ENCODE measurements at regions of chr2 and their contacts with region 1.

Region 1: DNA sequence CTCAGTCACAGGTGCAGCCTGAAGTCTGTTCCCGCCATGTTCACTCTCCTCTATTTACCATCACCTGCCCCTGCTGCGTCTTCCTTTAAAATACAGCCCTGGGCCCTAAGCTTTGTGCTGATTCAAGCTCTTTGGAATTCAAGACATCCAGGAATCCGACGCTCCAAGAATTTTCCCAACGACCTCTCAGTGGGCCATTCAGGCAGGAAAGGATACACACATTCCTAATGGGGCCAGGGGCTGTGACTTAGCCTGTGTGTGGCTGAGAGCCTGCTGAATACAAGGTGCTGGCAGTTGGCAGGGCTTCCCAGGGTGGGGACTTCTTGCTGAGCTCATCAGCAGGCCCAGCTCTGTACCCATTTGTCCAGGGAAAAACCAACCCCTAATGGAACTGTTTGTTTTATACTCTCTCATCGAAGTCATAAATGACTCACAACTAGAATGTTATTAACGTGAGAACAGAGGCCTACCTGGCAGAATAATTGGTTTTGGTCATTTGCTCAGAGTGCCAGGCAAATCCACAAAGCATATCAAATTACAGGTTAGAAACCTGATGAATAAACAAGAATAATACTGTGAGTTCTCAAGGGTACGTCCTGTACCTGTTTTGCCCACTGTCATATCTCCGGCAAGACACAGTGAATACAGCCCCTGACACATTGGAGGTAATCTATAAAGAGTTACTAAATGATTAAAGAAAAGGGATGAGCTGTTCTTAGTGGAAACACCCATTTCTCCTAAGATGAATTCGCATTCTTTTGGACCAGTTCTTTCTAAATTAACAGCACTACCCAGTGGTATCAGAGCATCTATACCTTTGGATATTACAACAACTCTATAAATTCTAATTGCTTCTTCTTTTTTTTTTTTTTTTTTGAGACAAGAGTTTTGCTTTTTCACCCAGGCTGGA is 12.6 kb upstream of the KCMF1 start:
- DNase-seq: peak; percentile 95
- H3K27ac ChIP-seq: peak overlapping the region; percentile 97
- CTCF ChIP-seq: no peak

Region 2: DNA sequence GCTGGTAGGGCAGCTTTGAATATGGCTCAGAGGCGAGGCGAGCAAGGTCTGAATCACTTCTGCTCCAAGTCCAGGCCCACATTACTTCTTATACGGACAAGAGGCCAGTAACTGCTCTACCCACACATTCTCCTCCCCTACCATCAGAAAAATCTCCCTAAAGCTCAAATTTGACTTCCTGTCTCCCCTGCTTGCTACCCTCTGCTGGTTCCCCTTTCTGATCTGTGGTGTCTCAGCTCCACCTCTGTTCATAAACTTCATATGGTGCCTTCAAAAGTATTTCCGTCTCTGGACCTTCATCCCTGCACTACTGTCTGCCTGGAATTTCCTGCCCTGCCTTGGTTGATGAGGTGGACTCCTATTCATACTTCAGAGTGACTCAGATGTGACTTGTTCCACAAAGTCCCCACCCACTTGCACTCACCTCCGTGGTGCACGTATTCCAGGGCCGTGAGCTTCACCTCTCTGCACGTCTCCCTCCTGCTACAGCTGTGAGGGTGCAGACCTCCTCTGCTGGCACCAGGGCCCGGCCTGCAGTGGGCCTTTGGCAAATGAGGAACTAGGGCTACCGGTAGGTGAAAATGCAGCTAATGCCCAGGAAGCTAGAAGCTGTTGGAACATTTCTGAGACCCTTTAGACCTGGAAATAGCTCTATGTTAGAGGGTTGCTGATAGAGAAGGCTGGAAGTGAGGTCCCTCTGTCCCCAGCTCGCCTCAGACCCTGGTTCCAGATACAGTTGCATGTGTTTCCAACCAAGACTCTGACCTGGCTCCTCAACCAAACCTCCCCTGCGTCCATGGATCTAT is 12.0 kb before region 1 on chr2:
- CTCF ChIA-PET with region 1: no interaction called
- POLR2A ChIA-PET with region 1: interaction called, 10 read pairs
- DNase-seq: peak; percentile 93
- H3K27ac ChIP-seq: peak overlapping the region; percentile 97
- CTCF ChIP-seq: no peak

Region 3: GRCh38 chr2:84972207-84972790 is 13.9 kb after region 1 on chr2:
- CTCF ChIA-PET with region 1: no interaction called
- POLR2A ChIA-PET with region 1: interaction called, 10 read pairs
- DNase-seq: no peak
- H3K27ac ChIP-seq: peak overlapping the region; percentile 98
- CTCF ChIP-seq: no peak